A549 (cell line): ENCODE measurements at regions of chr7 and their contacts with region 1.

Region 1: DNA sequence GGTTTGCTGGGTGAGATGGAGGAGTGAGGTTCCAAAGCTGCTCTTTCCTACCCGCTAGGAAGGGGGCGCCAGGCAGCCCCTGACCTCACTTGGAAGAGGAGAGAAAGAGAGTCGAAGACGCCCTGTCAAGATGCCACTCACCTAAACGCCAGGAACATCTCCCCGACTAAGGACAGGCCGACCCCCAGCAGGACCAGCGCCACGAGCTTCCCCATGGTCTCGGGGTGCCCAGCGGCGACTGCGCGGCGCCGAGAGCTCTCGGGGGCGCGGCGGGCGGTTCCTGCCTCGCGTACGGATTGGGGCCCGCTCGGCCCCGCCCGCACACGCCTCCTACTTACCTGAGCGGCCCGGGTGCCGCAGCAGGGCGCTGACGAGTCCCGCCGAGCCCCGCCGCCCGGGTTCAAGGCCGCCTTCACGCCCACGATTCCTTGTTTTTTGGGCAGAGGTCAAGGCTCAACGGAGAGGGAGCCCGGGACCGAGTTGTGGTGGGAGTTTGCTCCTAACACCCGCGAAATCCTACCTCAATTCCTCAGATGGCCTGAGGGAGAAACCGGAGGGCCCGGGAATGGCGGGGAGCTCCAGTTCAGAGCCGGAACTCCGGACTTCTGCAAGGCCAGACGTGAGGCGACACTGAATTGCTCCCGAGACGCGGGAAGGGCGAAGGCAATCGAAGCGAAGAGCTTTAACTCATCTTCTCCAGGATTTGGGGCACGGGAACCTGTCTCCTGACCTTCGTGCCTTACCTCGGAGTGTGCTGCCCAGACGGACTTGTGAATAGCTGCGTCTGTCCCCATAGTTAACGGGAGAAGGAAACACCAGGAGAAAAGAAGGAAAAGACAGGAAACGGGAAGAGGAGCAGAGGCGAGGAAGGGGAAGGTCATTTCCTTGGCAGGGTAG is at the start of gene PON3:
- DNase-seq: peak; percentile 89 to 91
- ATAC-seq: peak; percentile 89 to 90
- H3K4me3 ChIP-seq: peak within 1 kb of the TSS; percentile 62
- H3K27ac ChIP-seq: peak within 1 kb of the TSS; percentile 90 to 97
- H3K4me1 ChIP-seq: peaks cover 56% of the 10 kb centered on the region
- CTCF ChIP-seq: peak; percentile 83
- EP300 ChIP-seq: no peak
- POLR2A ChIP-seq: peak; percentile 36; the same call in 1 of the 2 replicates
- RAD21 ChIP-seq: peak; percentile 65 to 68
- polyA plus RNA-seq, gene PON3: 142 and 161 TPM in 2 replicates

Region 2: DNA sequence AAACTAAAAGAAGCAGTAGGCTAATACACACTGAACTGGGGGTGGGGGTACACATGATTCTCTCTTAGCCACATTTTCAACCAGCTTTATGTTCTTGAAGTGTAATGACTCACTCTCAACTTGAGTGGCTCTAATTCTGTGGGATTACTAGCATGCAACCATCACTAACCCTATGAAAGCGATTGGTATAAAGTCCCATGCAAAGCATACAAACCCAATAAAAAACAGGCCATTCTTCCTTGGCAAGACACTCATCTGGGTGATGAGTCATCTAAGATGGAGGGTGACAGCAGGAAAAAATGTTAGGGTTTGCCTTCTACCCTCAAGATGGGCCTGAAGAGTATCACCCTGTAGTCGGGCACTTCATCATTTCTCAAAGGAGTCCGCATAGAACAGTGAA is 14.7 kb after region 1 on chr7:
- CTCF ChIA-PET with region 1: interaction called, 29 read pairs
- POLR2A ChIA-PET with region 1: interaction called, 7 read pairs
- DNase-seq: peak in 1 of 2 experiments; percentile 57
- ATAC-seq: peak; percentile 60 to 63
- H3K4me3 ChIP-seq: no peak overlapping the region
- H3K27ac ChIP-seq: peak overlapping the region; percentile 0 to 63; a peak in 4 of 6 replicates
- H3K4me1 ChIP-seq: peaks cover 86% of the 10 kb centered on the region
- CTCF ChIP-seq: no peak
- EP300 ChIP-seq: no peak
- POLR2A ChIP-seq: no peak
- RAD21 ChIP-seq: no peak

Region 3: DNA sequence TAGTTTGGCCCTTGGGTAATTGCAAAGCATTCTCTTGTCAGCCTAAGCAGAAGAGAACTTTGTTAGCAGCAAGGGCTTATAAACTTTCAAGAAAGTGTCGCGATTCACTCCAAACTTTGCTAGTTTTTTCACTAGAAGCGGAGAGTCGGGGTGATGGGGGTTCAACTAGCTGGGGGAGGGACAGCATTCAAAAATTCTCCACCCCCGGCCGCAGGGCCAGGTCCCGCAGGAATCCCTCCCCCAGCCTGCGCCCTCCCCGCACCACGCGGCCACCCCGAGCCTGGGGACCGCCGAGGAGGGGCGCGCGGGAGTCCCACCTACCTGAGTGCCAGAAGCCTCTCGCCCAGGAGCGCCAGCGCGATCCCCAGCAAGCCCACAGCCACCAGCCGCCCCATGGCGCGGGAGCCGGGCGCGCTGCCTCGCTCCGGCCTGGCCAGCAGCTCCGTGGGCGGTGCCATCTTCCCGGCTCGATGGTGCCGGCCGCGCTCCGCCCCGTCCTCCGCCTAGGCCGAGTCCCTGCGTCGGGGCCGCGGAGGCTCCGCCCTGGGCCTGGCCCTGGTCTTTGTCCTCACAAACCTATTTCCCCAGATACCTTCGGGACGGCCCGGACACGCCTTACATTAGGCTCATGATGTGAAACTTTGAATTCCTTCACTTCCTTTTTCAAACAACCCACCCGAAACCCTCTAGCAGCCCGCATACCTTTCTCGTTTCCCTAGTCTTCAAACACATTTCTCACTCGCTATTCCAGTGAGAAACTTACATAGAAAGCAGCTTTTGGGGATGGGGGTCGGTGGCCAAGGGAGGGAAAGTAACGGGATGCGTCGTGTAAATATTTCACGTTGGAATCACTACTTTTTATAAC is 38.4 kb after region 1 on chr7 and contains the start of gene PON2:
- CTCF ChIA-PET with region 1: interaction called, 18 read pairs
- POLR2A ChIA-PET with region 1: interaction called, 16 read pairs
- DNase-seq: peak; percentile 79 to 97
- ATAC-seq: peak; percentile 94 to 95
- H3K4me3 ChIP-seq: peak within 1 kb of the TSS; percentile 65
- H3K27ac ChIP-seq: peak within 1 kb of the TSS; percentile 96 to 98
- H3K4me1 ChIP-seq: peaks cover 81% of the 10 kb centered on the region
- CTCF ChIP-seq: no peak
- EP300 ChIP-seq: peak; percentile 10 to 71; a peak in 2 of 5 replicates
- POLR2A ChIP-seq: peak; percentile 88
- RAD21 ChIP-seq: no peak; a peak in 1 of 5 replicates
- polyA plus RNA-seq, gene PON2: 829 TPM in 2 replicates

Region 4: GRCh38 chr7:95470452-95470851 is 74.1 kb after region 1 on chr7:
- CTCF ChIA-PET with region 1: interaction called, 176 read pairs
- POLR2A ChIA-PET with region 1: interaction called, 26 read pairs
- DNase-seq: peak; percentile 41 to 83
- ATAC-seq: peak; percentile 84 to 89
- H3K4me3 ChIP-seq: peak overlapping the region; percentile 17; the same call in 1 of the 3 replicates
- H3K27ac ChIP-seq: peak overlapping the region; percentile 92 to 94
- H3K4me1 ChIP-seq: peaks cover 37% of the 10 kb centered on the region
- CTCF ChIP-seq: no peak
- EP300 ChIP-seq: peak; percentile 82 to 95; a peak in 3 of 5 replicates
- POLR2A ChIP-seq: no peak
- RAD21 ChIP-seq: peak in 1 of 2 experiments; percentile 48; a peak in 4 of 5 replicates

Region 5: DNA sequence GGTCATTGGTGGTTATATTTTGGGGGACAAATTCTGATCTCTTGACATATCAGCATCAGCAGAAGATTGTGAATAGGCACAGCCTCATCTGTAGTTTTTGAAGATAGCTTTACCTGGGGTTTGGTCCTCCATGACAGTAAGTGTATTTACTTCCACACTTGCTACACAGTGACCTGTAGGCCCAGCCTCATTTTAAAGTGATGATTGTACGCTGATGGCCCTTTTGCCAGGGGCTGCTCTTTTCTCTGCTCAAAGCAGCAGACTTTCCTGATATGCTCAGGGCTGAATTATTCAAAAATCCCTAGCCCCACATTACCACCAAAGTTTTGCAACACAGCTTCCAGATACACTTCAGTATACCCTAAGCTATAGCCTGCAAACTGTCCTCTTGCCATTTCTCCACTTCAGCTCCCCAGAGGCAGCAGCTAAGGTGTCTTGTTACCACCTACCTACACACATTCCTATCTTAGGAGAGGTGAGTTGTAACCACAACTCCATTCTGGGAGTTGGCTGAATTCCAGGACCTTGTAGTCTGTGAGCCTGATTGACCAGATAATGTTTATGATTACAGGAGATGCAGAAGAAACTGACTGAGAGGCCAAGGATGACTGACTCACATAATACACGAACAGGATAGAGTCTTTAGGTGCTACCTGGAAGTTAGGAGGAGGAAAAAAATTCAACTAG is 95.4 kb after region 1 on chr7:
- CTCF ChIA-PET with region 1: interaction called, 19 read pairs
- POLR2A ChIA-PET with region 1: no interaction called
- DNase-seq: peak in 1 of 2 experiments; percentile 34
- ATAC-seq: peak; percentile 24 to 51; a peak in 3 of 6 replicates
- H3K4me3 ChIP-seq: no peak overlapping the region
- H3K27ac ChIP-seq: peak overlapping the region; percentile 19 to 75; a peak in 5 of 6 replicates
- H3K4me1 ChIP-seq: peaks cover 45% of the 10 kb centered on the region
- CTCF ChIP-seq: no peak
- EP300 ChIP-seq: no peak
- POLR2A ChIP-seq: no peak
- RAD21 ChIP-seq: no peak